ENCODE measurements at regions of chr22 and their contacts with region 1.

Region 1: GRCh38 chr22:17695986-17696385 is 57.4 kb downstream of the BCL2L13 start:
- DNase-seq: no peak
- H3K4me3 ChIP-seq: no peak overlapping the region
- H3K27ac ChIP-seq: no peak overlapping the region
- H3K4me1 ChIP-seq: no peaks in the 10 kb centered on the region
- CTCF ChIP-seq: no peak

Region 2: GRCh38 chr22:17710023-17710422 is 14.0 kb after region 1 on chr22:
- CTCF ChIA-PET with region 1: no interaction called
- POLR2A ChIA-PET with region 1: no interaction called
- intact Hi-C with region 1: loop called (anchors 2 kb)
- DNase-seq: no peak
- H3K4me3 ChIP-seq: no peak overlapping the region
- H3K27ac ChIP-seq: no peak overlapping the region
- H3K4me1 ChIP-seq: peaks cover 17% of the 10 kb centered on the region
- CTCF ChIP-seq: no peak